Left cardiac atrium (tissue), 4 donors: ENCODE measurements at regions of chr12 and their contacts with region 1.

Region 1: DNA sequence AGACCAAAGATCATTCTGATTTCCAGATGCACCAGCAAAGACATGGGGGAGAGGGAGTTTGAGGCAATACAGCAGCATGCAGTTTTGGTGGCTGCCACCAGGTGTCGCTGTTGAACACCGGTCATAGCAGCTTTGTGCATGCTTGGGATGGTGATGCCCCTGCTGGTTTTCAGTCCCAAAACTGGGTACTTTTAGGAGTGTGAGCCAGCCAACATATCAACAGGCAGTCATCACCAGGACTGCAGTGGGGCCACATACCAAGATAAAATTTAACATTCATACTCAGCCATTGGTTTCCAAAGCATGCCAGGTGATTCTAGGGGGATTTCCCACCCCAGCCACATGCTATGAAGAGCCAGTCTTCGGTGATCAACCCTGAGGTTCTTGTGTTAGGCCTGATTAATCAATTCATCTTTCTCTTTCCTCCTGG is 64.2 kb downstream of the PHETA1 start:
- DNase-seq: no peak
- ATAC-seq: no peak

Region 2: DNA sequence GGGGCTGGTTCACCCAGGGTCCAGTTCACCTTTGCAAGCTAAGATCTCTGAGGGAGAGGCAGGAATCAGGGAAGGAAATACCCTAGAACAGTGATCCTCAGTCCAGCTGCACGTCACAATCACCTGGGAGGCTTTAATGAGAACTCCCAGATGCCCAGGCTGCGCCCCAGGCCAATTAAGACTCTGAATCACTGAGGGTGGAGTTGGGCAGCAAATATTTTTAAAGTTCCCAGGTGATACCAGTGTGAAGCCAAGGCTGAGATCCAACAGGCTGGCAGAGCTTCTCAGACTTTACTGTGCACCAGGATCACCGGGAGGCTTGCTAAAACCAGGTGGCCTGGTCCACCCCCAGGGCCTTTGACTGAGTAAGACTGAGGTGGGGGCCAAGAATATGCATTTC is 408.1 kb before region 1 on chr12:
- intact Hi-C with region 1: loop called (anchors 2 to 10 kb)
- DNase-seq: no peak
- ATAC-seq: no peak

Region 3: GRCh38 chr12:110937104-110937641 is 367.5 kb before region 1 on chr12:
- intact Hi-C with region 1: loop called (anchors 2 to 10 kb)
- DNase-seq: peak; percentile 40
- ATAC-seq: peak; percentile 59 to 63

Region 4: DNA sequence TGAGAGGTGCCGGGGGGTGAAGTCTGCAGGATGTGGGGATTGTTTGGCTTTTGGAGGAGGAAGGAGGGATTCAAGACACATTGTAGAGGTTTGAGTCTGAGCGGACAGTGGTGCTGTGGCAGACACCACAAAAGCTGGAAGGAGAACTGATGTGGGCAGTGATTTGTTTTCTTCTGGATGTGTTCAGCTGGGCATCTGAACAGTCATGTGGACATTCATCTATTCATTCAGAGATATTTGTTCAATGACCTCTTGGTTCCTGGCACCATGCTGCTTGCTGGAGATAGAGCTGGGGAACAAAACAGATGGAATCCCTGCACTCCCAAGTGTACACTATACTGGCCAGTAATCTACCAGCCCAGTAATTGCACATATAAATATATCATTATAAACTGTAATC is 1178.1 kb after region 1 on chr12:
- intact Hi-C with region 1: no loop called
- DNase-seq: no peak
- ATAC-seq: no peak